ENCODE measurements at regions of chrX and their contacts with region 1.

Region 1: GRCh38 chrX:148290931-148291330 is 209.5 kb upstream of the AFF2 start:
- DNase-seq: no peak
- H3K4me3 ChIP-seq: no peak overlapping the region
- CTCF ChIP-seq: no peak
- POLR2A ChIP-seq: no peak

Region 2: GRCh38 chrX:148069759-148070503 is 221.0 kb before region 1 on chrX:
- intact Hi-C with region 1: loop called (anchors 5 kb)
- DNase-seq: no peak
- H3K4me3 ChIP-seq: no peak overlapping the region
- CTCF ChIP-seq: no peak
- POLR2A ChIP-seq: no peak

Measured in lower leg skin (tissue), 4 donors.